ENCODE measurements at regions of chr1 and their contacts with region 1.

Region 1: GRCh38 chr1:6602669-6603237 is at the start of gene KLHL21:
- DNase-seq: peak; percentile 93
- ATAC-seq: peak; percentile 45
- H3K4me3 Mint-ChIP-seq: peak within 1 kb of the TSS; percentile 97
- H3K27ac Mint-ChIP-seq: peak within 1 kb of the TSS; percentile 95
- H3K4me1 Mint-ChIP-seq: peaks cover 30% of the 10 kb centered on the region
- H3K27me3 Mint-ChIP-seq: no peaks in the 10 kb centered on the region
- total RNA-seq, gene KLHL21: 12.4 to 15.7 TPM

Region 2: GRCh38 chr1:5998051-5998905 is 604.5 kb before region 1 on chr1:
- CTCF ChIA-PET with region 1: no interaction called
- POLR2A ChIA-PET with region 1: no interaction called
- intact Hi-C with region 1: no loop called
- DNase-seq: no peak
- ATAC-seq: no peak
- H3K4me3 Mint-ChIP-seq: no peak overlapping the region
- H3K27ac Mint-ChIP-seq: no peak overlapping the region
- H3K4me1 Mint-ChIP-seq: peaks cover 22% of the 10 kb centered on the region
- H3K27me3 Mint-ChIP-seq: no peaks in the 10 kb centered on the region

Region 3: GRCh38 chr1:6026095-6026809 is 576.5 kb before region 1 on chr1:
- CTCF ChIA-PET with region 1: no interaction called
- POLR2A ChIA-PET with region 1: no interaction called
- intact Hi-C with region 1: loop called in 1 of 2 experiments (anchors 2 kb)
- DNase-seq: peak; percentile 97
- ATAC-seq: peak; percentile 81
- H3K4me3 Mint-ChIP-seq: peak overlapping the region; percentile 97
- H3K27ac Mint-ChIP-seq: peak overlapping the region; percentile 97
- H3K4me1 Mint-ChIP-seq: peaks cover 40% of the 10 kb centered on the region
- H3K27me3 Mint-ChIP-seq: no peaks in the 10 kb centered on the region

Region 4: DNA sequence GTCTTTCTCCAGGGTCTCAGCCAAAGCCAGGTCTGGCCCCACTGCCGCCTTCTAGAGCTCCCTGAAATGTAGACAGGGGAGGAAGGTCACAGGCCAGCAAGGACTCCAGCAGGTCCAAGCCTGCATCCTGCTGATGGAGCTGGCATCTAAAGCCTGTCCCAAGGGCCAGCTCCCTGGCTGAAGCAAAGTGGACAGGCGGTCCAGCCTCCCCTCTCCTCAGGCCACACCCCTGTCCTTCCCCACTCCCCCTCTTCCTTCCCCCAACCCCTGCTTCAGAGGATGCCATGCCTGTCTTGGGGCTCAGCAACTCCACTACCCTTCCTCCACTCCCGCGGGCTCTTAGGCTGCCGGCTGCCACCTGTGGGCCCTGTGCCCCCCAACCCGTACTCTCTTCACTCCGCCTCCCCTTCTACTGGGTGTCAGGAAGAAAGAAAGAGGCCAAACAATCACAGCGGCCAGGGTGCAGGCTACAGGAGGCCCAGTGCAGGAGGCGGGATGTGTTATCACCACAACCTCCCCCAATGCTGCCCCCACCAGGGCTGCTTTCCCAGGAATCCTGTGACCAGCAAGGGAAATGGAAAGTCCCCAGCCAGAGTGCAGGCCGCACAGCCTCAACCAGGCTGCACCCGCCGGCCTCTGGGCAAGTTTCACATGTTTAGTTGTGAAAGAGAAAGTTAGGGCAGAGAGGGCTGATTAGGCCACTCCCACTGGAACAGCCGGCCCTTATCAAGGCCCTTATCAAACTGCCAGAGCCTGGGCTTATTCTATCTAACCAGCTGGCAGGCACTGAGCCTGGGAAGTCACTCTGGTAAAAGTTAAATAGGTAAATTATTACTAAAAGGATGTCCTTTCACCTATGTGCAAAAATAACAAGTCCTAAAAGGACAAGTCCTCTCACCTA is 243.3 kb before region 1 on chr1:
- CTCF ChIA-PET with region 1: no interaction called
- POLR2A ChIA-PET with region 1: no interaction called
- intact Hi-C with region 1: loop called in 1 of 2 experiments (anchors 1 kb)
- DNase-seq: peak; percentile 76
- ATAC-seq: peak; percentile 83
- H3K4me3 Mint-ChIP-seq: peak overlapping the region; percentile 57
- H3K27ac Mint-ChIP-seq: peak overlapping the region; percentile 86
- H3K4me1 Mint-ChIP-seq: peaks cover 55% of the 10 kb centered on the region
- H3K27me3 Mint-ChIP-seq: no peaks in the 10 kb centered on the region

Region 5: GRCh38 chr1:6579374-6580118 is 23.2 kb before region 1 on chr1 and contains the start of gene ZBTB48:
- CTCF ChIA-PET with region 1: interaction called, 14 read pairs
- POLR2A ChIA-PET with region 1: interaction called, 6 read pairs
- intact Hi-C with region 1: loop called in 1 of 2 experiments (anchors 1 kb)
- DNase-seq: peak; percentile 99
- ATAC-seq: peak; percentile 99
- H3K4me3 Mint-ChIP-seq: peak within 1 kb of the TSS; percentile 92
- H3K27ac Mint-ChIP-seq: peak within 1 kb of the TSS; percentile 89
- H3K4me1 Mint-ChIP-seq: peaks cover 30% of the 10 kb centered on the region
- H3K27me3 Mint-ChIP-seq: no peaks in the 10 kb centered on the region
- total RNA-seq, gene ZBTB48: 23.2 to 26.0 TPM

Region 6: DNA sequence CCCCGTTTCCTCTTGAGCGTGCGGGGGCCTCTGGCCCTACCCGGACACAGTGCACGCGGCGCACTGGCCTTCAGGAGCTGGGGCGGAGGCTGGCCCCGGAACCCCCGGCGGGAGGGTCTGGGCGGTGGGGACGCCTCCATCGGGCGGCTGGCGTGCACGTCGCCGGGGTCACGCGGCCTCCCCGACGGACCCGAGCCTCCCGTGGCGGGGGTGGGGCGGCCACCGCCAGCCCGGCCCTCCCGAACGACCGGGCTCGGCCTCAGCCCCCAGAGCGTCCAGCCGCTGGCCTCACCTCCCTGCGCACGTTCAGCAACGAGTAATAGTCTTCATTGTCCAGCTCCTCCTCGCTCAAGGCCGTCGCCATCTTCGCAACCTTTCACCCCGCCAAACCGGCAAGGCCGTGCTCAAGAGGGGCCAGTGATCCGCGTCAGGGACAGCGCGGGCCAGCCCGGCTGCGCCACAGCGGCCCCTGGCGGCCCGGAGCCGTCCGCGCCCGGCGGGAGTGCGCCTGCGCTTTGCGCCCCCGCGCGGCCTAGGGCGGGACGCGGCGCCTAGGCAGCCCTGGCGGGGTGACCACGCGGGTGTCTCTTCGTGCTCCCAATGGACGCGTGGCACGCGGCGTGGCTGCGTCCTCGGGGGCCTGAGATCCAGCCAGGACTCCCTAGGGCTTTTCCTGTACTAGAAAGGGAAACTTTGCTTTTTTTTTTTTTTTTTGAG is 98.8 kb after region 1 on chr1 and contains the start of gene DNAJC11:
- CTCF ChIA-PET with region 1: no interaction called
- POLR2A ChIA-PET with region 1: no interaction called
- intact Hi-C with region 1: loop called in 1 of 2 experiments (anchors 1 kb)
- DNase-seq: peak; percentile 93
- ATAC-seq: peak; percentile 98
- H3K4me3 Mint-ChIP-seq: peak within 1 kb of the TSS; percentile 90
- H3K27ac Mint-ChIP-seq: peak within 1 kb of the TSS; percentile 92
- H3K4me1 Mint-ChIP-seq: peaks cover 28% of the 10 kb centered on the region
- H3K27me3 Mint-ChIP-seq: no peaks in the 10 kb centered on the region
- total RNA-seq, gene DNAJC11: 53.2 to 62.0 TPM

Region 7: GRCh38 chr1:6854165-6854564 is 251.4 kb after region 1 on chr1:
- CTCF ChIA-PET with region 1: no interaction called
- POLR2A ChIA-PET with region 1: no interaction called
- intact Hi-C with region 1: no loop called
- DNase-seq: no peak
- ATAC-seq: no peak
- H3K4me3 Mint-ChIP-seq: no peak overlapping the region
- H3K27ac Mint-ChIP-seq: no peak overlapping the region
- H3K4me1 Mint-ChIP-seq: peaks cover 2% of the 10 kb centered on the region
- H3K27me3 Mint-ChIP-seq: no peaks in the 10 kb centered on the region

Region 8: GRCh38 chr1:7961216-7962015 is 1358.7 kb after region 1 on chr1 and contains the start of gene PARK7:
- CTCF ChIA-PET with region 1: no interaction called
- POLR2A ChIA-PET with region 1: no interaction called
- intact Hi-C with region 1: loop called in 1 of 2 experiments (anchors 10 kb)
- DNase-seq: peak; percentile 100
- ATAC-seq: peak; percentile 98
- H3K4me3 Mint-ChIP-seq: peak within 1 kb of the TSS; percentile 100
- H3K27ac Mint-ChIP-seq: peak within 1 kb of the TSS; percentile 100
- H3K4me1 Mint-ChIP-seq: peaks cover 49% of the 10 kb centered on the region
- H3K27me3 Mint-ChIP-seq: no peaks in the 10 kb centered on the region
- total RNA-seq, gene PARK7: 294 to 390 TPM

Measured in activated CD4-positive, alpha-beta T cell treated with anti-CD3 and anti-CD28 coated beads for 36 hours (primary cell).